Endothelial cell of umbilical vein (primary cell): ENCODE measurements at regions of chr1 and their contacts with region 1.

Region 1: GRCh38 chr1:54671985-54672608 is 30.5 kb downstream of the MROH7 start:
- DNase-seq: peak; percentile 49
- H3K4me3 ChIP-seq: no peak overlapping the region
- H3K27ac ChIP-seq: no peak overlapping the region
- H3K4me1 ChIP-seq: no peaks in the 10 kb centered on the region
- H3K27me3 ChIP-seq: peaks cover 0 to 2% of the 10 kb centered on the region in 2 experiments
- CTCF ChIP-seq: peak; percentile 63 to 78
- POLR2A ChIP-seq: no peak

Region 2: GRCh38 chr1:54227091-54227602 is 444.9 kb before region 1 on chr1:
- CTCF ChIA-PET with region 1: no interaction called
- POLR2A ChIA-PET with region 1: no interaction called
- dilution Hi-C with region 1: no loop called
- intact Hi-C with region 1: no loop called
- DNase-seq: no peak
- H3K4me3 ChIP-seq: no peak overlapping the region
- H3K27ac ChIP-seq: no peak overlapping the region
- H3K4me1 ChIP-seq: no peaks in the 10 kb centered on the region
- H3K27me3 ChIP-seq: no peaks in the 10 kb centered on the region
- CTCF ChIP-seq: no peak
- POLR2A ChIP-seq: no peak

Region 3: DNA sequence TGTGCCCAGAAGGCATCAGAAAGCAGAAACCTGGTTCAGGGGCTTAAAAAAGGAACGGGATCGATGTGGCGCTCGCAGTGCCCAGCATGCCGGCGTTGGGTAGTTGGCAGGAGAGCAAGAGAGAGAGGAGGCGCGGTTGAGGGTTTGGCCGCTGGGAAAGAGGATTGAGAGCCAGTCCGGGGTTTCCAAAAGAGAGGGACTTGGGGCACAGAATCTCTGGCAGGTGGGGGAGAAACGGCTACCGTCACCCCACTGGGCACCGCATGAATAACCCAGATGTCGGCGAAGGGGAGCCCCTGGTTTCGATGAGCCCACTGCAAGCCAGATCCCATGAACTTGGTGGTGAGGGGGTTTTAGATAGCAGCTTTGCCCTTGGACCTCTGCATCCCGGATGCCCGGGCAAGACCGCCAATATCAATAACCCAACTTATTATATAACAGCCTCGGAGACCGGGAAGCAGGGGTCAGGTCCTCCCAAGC is 184.5 kb before region 1 on chr1:
- CTCF ChIA-PET with region 1: no interaction called
- POLR2A ChIA-PET with region 1: no interaction called
- dilution Hi-C with region 1: no loop called
- intact Hi-C with region 1: no loop called
- DNase-seq: no peak
- H3K4me3 ChIP-seq: peak overlapping the region in 2 of 3 experiments; percentile 3 to 11
- H3K27ac ChIP-seq: no peak overlapping the region
- H3K4me1 ChIP-seq: peaks cover 17% of the 10 kb centered on the region
- H3K27me3 ChIP-seq: no peaks in the 10 kb centered on the region
- CTCF ChIP-seq: no peak
- POLR2A ChIP-seq: no peak

Region 4: GRCh38 chr1:54791880-54792522 is 119.9 kb after region 1 on chr1:
- CTCF ChIA-PET with region 1: interaction called, 6 read pairs
- POLR2A ChIA-PET with region 1: no interaction called
- dilution Hi-C with region 1: no loop called
- intact Hi-C with region 1: loop called (anchors 1 kb)
- DNase-seq: peak; percentile 20
- H3K4me3 ChIP-seq: no peak overlapping the region
- H3K27ac ChIP-seq: no peak overlapping the region
- H3K4me1 ChIP-seq: no peaks in the 10 kb centered on the region
- H3K27me3 ChIP-seq: peaks cover 2% of the 10 kb centered on the region in 2 experiments
- CTCF ChIP-seq: peak; percentile 55 to 73
- POLR2A ChIP-seq: no peak

Region 5: DNA sequence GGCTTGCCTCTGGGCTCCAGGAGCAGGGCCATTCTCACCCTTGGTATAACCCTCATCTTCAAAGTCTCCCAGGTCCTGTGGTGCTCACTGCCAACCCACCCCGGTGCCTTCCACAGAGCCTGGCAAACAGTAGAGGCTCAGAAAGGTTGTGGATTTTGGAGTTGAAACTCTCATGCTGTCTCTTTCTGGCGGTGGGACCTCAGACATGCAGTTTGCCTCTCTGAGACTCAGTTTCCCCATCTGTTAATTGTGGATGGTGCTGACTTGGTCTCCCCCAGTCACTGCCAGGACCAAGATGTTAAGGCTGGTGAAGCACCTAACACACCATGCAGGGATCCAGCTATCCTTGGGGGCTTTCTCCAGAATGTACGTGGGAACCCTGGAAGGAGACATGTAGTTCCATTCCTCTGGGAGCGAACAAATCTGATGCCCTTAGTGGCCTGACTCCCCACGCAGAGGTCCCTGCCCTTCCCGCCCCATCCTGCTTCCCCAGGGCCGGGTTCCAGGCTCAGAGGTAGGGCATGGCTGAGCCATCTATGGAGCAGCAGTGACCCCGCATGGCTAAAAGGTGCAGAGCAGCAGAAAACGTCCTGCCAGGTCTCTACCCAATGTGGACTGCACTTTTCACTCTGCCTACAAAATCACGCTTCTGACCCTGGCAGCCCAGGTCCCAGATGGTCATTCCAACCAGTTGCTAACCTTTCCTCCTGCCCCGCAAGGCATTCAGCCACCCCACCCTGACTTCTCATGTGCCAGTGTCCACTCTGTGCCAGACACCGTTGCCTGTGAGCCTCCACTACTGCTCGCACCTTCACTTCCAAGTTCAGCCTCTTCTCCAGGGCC is 138.2 kb after region 1 on chr1:
- CTCF ChIA-PET with region 1: interaction called, 4 read pairs
- POLR2A ChIA-PET with region 1: no interaction called
- dilution Hi-C with region 1: no loop called
- intact Hi-C with region 1: loop called (anchors 1 kb)
- DNase-seq: peak; percentile 54
- H3K4me3 ChIP-seq: no peak overlapping the region
- H3K27ac ChIP-seq: no peak overlapping the region
- H3K4me1 ChIP-seq: no peaks in the 10 kb centered on the region
- H3K27me3 ChIP-seq: no peaks in the 10 kb centered on the region
- CTCF ChIP-seq: peak; percentile 76 to 89
- POLR2A ChIP-seq: no peak

Region 6: DNA sequence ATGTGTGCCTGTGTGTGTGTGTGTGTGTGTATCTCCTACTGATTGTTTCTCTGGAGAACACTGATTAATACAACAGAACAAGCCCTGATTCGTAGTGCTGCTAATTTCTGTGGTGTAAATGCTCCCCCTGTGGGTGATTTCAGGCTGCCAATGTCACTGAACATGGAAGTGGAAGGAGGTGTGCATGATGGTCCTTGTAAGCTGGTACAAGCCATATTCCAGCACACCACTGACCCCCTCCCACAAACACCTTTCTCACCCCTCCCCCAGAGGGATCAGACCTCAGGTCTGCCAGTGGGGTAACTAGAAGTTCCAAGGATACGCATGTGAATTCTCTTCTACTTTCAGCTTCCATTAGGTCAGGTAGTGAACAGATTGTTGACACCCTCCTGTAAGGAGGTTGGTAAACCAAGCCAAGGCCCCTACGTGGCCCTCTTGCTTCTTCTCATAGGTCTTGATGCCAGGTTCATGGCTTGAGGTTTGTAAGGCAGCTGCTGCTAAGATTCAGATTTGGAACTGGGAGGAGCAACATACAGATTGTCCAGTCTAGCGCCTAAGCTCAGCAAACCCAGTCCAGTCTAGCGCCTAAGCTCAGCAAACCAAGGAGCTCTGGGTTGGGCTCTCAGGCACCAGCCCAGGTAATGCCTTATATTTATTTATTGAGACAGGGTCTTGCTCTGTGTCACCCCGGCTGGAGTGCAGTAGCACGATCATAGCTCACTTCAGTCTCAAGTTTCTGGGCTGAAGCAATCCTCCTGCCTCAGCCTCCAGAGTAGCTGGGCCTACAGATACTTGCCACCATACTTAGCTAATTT is 176.2 kb after region 1 on chr1:
- CTCF ChIA-PET with region 1: no interaction called
- POLR2A ChIA-PET with region 1: no interaction called
- dilution Hi-C with region 1: no loop called
- intact Hi-C with region 1: no loop called
- DNase-seq: no peak
- H3K4me3 ChIP-seq: no peak overlapping the region
- H3K27ac ChIP-seq: no peak overlapping the region
- H3K4me1 ChIP-seq: no peaks in the 10 kb centered on the region
- H3K27me3 ChIP-seq: no peaks in the 10 kb centered on the region
- CTCF ChIP-seq: no peak
- POLR2A ChIP-seq: no peak